Activated CD4-positive, alpha-beta memory T cell treated with anti-CD3 and anti-CD28 coated beads for 36 hours (primary cell): ENCODE measurements at regions of chr21 and their contacts with region 1.

Region 1: GRCh38 chr21:44939532-44940115 is at the start of gene SLX9:
- DNase-seq: peak; percentile 88
- H3K4me3 Mint-ChIP-seq: peak within 1 kb of the TSS; percentile 82
- H3K27ac Mint-ChIP-seq: peak within 1 kb of the TSS; percentile 79
- H3K4me1 Mint-ChIP-seq: peaks cover 36% of the 10 kb centered on the region
- H3K27me3 Mint-ChIP-seq: no peaks in the 10 kb centered on the region
- total RNA-seq, gene SLX9: 60.7 to 64.6 TPM

Region 2: GRCh38 chr21:44949779-44950198 is 10.2 kb after region 1 on chr21:
- CTCF ChIA-PET with region 1: interaction called, 10 read pairs
- POLR2A ChIA-PET with region 1: no interaction called
- intact Hi-C with region 1: no loop called
- DNase-seq: peak; percentile 87
- H3K4me3 Mint-ChIP-seq: no peak overlapping the region
- H3K27ac Mint-ChIP-seq: no peak overlapping the region
- H3K4me1 Mint-ChIP-seq: peaks cover 6% of the 10 kb centered on the region
- H3K27me3 Mint-ChIP-seq: no peaks in the 10 kb centered on the region